K562 (cell line): ENCODE measurements at regions of chr17 and their contacts with region 1.

Region 1: GRCh38 chr17:48630925-48631692 is 5.0 kb upstream of the HOXB9 start:
- DNase-seq: peak; percentile 79 to 93 (median 86)
- ATAC-seq: peak; percentile 71
- H3K4me3 ChIP-seq: peak overlapping the region; percentile 97
- H3K27ac ChIP-seq: peak overlapping the region; percentile 97
- H3K4me1 ChIP-seq: peaks cover 46 to 71% of the 10 kb centered on the region in 2 experiments
- H3K27me3 ChIP-seq: no peaks in the 10 kb centered on the region
- CTCF ChIP-seq: no peak
- EP300 ChIP-seq: peak; percentile 82
- POLR2A ChIP-seq: peak; percentile 79
- RAD21 ChIP-seq: no peak

Region 2: DNA sequence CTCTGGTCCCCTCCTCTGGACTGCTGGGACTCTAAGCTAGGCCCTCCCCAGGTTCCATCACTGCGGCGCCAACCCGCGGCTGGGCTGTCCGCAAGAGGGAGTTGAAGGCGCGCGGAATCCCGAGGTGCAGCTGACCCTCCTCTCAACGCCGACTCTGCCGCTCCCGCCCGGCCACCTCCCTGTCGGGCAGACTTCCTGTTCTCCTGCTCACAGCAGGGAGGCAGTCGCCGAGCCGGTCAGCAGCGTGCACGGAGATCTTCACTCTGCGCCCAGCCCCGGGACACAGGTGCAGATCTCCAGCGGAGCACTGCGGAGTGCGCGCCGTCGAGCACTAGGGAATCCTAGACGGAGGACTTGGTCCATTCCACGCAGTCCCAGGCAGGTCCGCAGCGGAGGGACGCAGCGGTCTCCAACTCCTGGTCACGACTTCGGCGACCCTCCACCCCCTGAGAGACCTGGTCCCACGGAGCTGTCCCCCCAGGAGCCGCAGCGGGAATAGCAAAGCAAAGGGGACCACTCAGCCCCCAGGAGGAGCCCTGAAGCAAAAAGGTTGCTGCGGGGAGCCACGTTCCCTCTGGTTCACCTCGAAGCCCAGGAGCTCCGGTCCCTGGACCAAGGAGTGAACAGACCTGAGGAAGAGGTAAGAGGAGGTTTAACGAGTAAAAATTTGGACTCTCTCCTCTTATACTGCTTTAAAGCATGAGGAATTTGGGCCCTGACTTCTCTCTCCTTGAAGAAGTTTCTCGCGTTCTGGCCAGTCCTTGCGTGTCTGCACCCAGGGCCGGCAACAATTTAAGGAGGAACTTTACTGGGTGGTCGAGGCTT is 11.5 kb after region 1 on chr17:
- CTCF ChIA-PET with region 1: no interaction called
- POLR2A ChIA-PET with region 1: interaction called, 43 read pairs
- in situ Hi-C with region 1: no loop called
- intact Hi-C with region 1: no loop called
- DNase-seq: no peak
- ATAC-seq: no peak
- H3K4me3 ChIP-seq: no peak overlapping the region
- H3K27ac ChIP-seq: no peak overlapping the region
- H3K4me1 ChIP-seq: peaks cover 26 to 44% of the 10 kb centered on the region in 2 experiments; a peak in 4 of 5 replicates
- H3K27me3 ChIP-seq: no peaks in the 10 kb centered on the region
- CTCF ChIP-seq: no peak
- EP300 ChIP-seq: no peak
- POLR2A ChIP-seq: no peak
- RAD21 ChIP-seq: no peak